ENCODE measurements at regions of chr17 and their contacts with region 1.

Region 1: GRCh38 chr17:71276079-71276478 is 844.7 kb upstream of the SOX9 start:
- H3K4me3 ChIP-seq: no peak overlapping the region
- H3K27ac ChIP-seq: no peak overlapping the region
- H3K4me1 ChIP-seq: peaks cover 4% of the 10 kb centered on the region; the same call in 1 of the 2 replicates
- CTCF ChIP-seq: no peak

Region 2: GRCh38 chr17:71237903-71238538 is 38.1 kb before region 1 on chr17:
- CTCF ChIA-PET with region 1: no interaction called
- POLR2A ChIA-PET with region 1: no interaction called
- H3K4me3 ChIP-seq: no peak overlapping the region
- H3K27ac ChIP-seq: no peak overlapping the region
- H3K4me1 ChIP-seq: no peaks in the 10 kb centered on the region
- CTCF ChIP-seq: no peak

Region 3: DNA sequence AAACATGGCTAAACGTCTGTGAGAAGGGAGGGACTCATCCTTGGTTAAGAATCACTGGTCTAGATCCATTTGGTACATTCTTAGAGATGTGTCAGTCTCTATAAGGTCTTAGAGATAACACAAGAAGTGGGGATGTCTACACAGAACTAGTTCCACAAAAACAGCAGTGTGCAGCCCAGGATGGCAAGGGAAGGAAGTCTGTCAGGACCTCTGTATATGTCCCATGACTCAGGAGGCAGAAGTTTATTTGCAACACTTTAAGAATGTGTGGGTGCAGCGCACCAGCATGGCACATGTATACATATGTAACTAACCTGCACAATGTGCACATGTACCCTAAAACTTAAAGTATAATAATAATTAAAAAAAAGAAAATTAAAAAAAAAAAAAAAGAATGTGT is 296.3 kb after region 1 on chr17:
- CTCF ChIA-PET with region 1: interaction called, 12 read pairs
- POLR2A ChIA-PET with region 1: no interaction called
- H3K4me3 ChIP-seq: no peak overlapping the region
- H3K27ac ChIP-seq: no peak overlapping the region
- H3K4me1 ChIP-seq: no peaks in the 10 kb centered on the region
- CTCF ChIP-seq: no peak